Naive thymus-derived CD4-positive, alpha-beta T cell (primary cell): ENCODE measurements at regions of chr10 and their contacts with region 1.

Region 1: DNA sequence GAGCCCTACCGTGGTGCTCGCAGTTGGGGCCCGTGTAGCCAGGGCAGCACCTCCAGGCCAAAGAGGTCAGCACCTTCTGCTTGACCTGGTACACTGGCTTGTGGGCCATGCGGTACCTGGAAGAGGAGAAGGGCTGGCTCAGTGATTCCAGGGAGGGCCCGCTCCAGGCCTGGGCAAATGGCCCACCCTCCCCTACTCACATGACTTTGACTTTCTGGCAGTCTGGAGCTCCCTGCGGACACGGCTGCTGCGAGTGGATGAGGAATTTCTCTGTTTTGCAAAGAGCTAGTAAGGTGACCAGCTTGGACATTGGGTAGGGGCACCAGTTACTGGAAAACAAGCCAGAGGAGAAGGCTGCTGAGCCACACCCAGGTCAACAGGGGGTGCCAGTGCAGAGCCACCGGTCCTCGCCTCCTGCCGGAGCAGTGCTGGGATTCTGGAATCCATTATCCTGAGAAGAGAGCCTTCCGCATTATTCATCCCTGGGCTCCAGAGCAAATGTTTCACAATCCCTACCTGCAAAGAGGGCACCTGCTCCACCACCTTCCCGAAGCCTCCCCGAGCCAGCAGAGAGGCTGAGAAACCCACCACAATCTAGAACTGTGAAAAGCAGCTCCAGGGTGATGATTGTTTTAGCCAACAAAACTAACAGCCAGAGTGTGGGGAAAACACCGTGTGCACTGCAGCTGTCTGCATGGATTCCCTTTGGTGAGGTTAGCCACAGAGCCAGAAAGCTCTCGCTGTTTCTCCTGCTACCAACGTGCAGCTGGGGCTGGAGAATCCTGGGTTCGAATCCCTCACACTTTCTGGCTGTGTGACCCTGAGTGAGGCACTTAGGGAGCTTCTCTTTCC is 11.8 kb downstream of the MMRN2 start:
- DNase-seq: peak in 1 of 9 donors; percentile 10
- ATAC-seq: no peak
- H3K4me3 ChIP-seq: no peak overlapping the region
- H3K4me3 Mint-ChIP-seq: peak overlapping the region in 2 of 10 donors; percentile 20 to 31
- H3K27ac ChIP-seq: no peak overlapping the region
- H3K27ac Mint-ChIP-seq: no peak overlapping the region
- H3K4me1 ChIP-seq: peaks cover 0 to 9% of the 10 kb centered on the region in 2 donors
- H3K4me1 Mint-ChIP-seq: peaks cover 16 to 38% (median 20%) of the 10 kb centered on the region in 7 donors
- H3K27me3 ChIP-seq: no peaks in the 10 kb centered on the region
- H3K27me3 Mint-ChIP-seq: peaks cover 0 to 6% (median 0%) of the 10 kb centered on the region in 5 donors

Region 2: GRCh38 chr10:86965986-86966654 is 20.5 kb after region 1 on chr10:
- CTCF ChIA-PET with region 1: interaction called, 90 read pairs
- POLR2A ChIA-PET with region 1: interaction called, 13 read pairs
- intact Hi-C with region 1: loop called in 1 of 2 experiments (anchors 1 kb)
- DNase-seq: no peak
- ATAC-seq: peak; percentile 1
- H3K4me3 ChIP-seq: peak overlapping the region; percentile 38
- H3K4me3 Mint-ChIP-seq: peak overlapping the region; percentile 55 to 87 (median 80)
- H3K27ac ChIP-seq: peak overlapping the region; percentile 61
- H3K27ac Mint-ChIP-seq: peak overlapping the region; percentile 54 to 90 (median 67)
- H3K4me1 ChIP-seq: peaks cover 4 to 45% of the 10 kb centered on the region in 2 donors
- H3K4me1 Mint-ChIP-seq: peaks cover 10 to 47% (median 43%) of the 10 kb centered on the region in 7 donors
- H3K27me3 ChIP-seq: no peaks in the 10 kb centered on the region
- H3K27me3 Mint-ChIP-seq: peaks cover 0 to 22% (median 0%) of the 10 kb centered on the region in 5 donors